ENCODE measurements at regions of chr16 and their contacts with region 1.

Region 1: GRCh38 chr16:19601083-19601976 is 45.8 kb downstream of the VPS35L start:
- DNase-seq: peak; percentile 46 to 73 (median 58)
- H3K4me3 ChIP-seq: no peak overlapping the region
- H3K27ac ChIP-seq: no peak overlapping the region
- H3K4me1 ChIP-seq: no peaks in the 10 kb centered on the region
- H3K27me3 ChIP-seq: no peaks in the 10 kb centered on the region

Region 2: DNA sequence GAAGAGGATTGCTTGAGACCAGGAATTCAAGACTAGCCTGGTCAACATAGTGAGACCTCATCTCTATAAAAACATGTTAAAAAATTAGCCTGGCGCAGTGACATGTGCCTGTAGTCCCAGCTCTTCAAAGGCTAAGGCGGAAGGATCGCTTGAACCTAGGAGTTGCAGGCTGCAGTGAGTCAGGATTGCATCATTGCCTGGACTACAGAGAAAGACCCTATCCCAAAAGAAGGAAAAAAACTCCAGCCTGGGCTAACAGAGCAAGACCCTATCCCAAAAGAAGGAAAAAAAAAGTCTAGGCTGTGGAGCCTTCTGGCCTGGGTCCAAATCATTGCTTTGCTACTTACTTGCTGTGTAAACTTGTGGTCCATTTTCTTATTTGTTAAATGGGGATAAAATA is 72.7 kb before region 1 on chr16:
- CTCF ChIA-PET with region 1: no interaction called
- POLR2A ChIA-PET with region 1: no interaction called
- DNase-seq: no peak
- H3K4me3 ChIP-seq: no peak overlapping the region
- H3K27ac ChIP-seq: no peak overlapping the region
- H3K4me1 ChIP-seq: peaks cover 8 to 17% (median 11%) of the 10 kb centered on the region in 4 experiments
- H3K27me3 ChIP-seq: no peaks in the 10 kb centered on the region

Region 3: GRCh38 chr16:19886073-19886941 is 285.0 kb after region 1 on chr16:
- CTCF ChIA-PET with region 1: interaction called, 50 read pairs
- POLR2A ChIA-PET with region 1: no interaction called
- DNase-seq: peak; percentile 79 to 90 (median 86)
- H3K4me3 ChIP-seq: peak overlapping the region in 3 of 7 experiments; percentile 11 to 63 (median 19)
- H3K27ac ChIP-seq: no peak overlapping the region
- H3K4me1 ChIP-seq: peaks cover 0 to 32% (median 26%) of the 10 kb centered on the region in 4 experiments
- H3K27me3 ChIP-seq: peaks cover 2 to 47% (median 21%) of the 10 kb centered on the region in 5 experiments